ENCODE measurements at regions of chr17 and their contacts with region 1.

Region 1: GRCh38 chr17:76353599-76354316 is at the start of gene PRPSAP1:
- DNase-seq: peak; percentile 66 to 77
- ATAC-seq: peak; percentile 96
- H3K4me3 ChIP-seq: peak within 1 kb of the TSS; percentile 72 to 99 (median 88)
- H3K27ac ChIP-seq: peak within 1 kb of the TSS; percentile 74 to 95 (median 84)
- H3K4me1 ChIP-seq: peaks cover 6 to 13% of the 10 kb centered on the region in 2 donors
- H3K27me3 ChIP-seq: no peaks in the 10 kb centered on the region
- CTCF ChIP-seq: peak; percentile 11 to 66 (median 48)
- POLR2A ChIP-seq: peak; percentile 60 to 75
- total RNA-seq, gene PRPSAP1: 10.2 to 23.4 (median 15.9) TPM

Region 2: DNA sequence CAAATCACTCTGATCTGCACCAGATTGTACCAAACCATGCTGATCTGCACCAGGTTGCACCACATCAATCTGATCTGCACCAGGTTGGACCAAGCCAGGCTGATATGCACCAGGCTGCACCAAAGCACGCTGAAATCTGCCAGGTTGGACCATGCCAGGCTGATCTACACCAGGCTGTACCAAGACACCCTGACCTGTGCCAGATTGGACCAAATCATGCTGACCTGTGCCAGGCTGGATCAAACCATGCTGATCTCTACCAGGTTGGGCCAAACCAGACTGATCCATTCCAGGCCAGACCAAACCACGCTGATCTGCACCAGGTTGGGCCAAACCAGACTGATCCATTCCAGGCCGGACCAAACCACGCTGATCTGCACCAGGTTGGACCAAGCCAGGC is 61.2 kb before region 1 on chr17:
- in situ Hi-C with region 1: no loop called
- intact Hi-C with region 1: no loop called
- DNase-seq: no peak
- ATAC-seq: no peak
- H3K4me3 ChIP-seq: no peak overlapping the region
- H3K27ac ChIP-seq: no peak overlapping the region
- H3K4me1 ChIP-seq: no peaks in the 10 kb centered on the region
- H3K27me3 ChIP-seq: no peaks in the 10 kb centered on the region
- CTCF ChIP-seq: no peak
- POLR2A ChIP-seq: no peak

Region 3: GRCh38 chr17:76370261-76370993 is 16.7 kb after region 1 on chr17:
- in situ Hi-C with region 1: no loop called
- intact Hi-C with region 1: loop called (anchors 2 kb)
- DNase-seq: peak in 1 of 2 donors; percentile 66
- ATAC-seq: peak; percentile 85 to 89
- H3K4me3 ChIP-seq: no peak overlapping the region
- H3K27ac ChIP-seq: peak overlapping the region in 3 of 4 donors; percentile 3 to 51 (median 30)
- H3K4me1 ChIP-seq: peaks cover 0 to 14% of the 10 kb centered on the region in 2 donors
- H3K27me3 ChIP-seq: no peaks in the 10 kb centered on the region
- CTCF ChIP-seq: peak; percentile 25 to 69 (median 40)
- POLR2A ChIP-seq: no peak

Region 4: GRCh38 chr17:76385892-76386721 is 32.3 kb after region 1 on chr17:
- in situ Hi-C with region 1: no loop called
- intact Hi-C with region 1: loop called (anchors 1 kb)
- DNase-seq: peak; percentile 54 to 59
- ATAC-seq: peak; percentile 30 to 49
- H3K4me3 ChIP-seq: peak overlapping the region; percentile 44 to 69 (median 62)
- H3K27ac ChIP-seq: peak overlapping the region in 2 of 4 donors; percentile 64 to 70
- H3K4me1 ChIP-seq: peaks cover 29 to 33% of the 10 kb centered on the region in 2 donors
- H3K27me3 ChIP-seq: peaks cover 0 to 12% (median 5%) of the 10 kb centered on the region in 3 donors
- CTCF ChIP-seq: peak; percentile 76 to 91 (median 89)
- POLR2A ChIP-seq: no peak

Measured in gastrocnemius medialis (tissue), 4 donors.